Naive thymus-derived CD4-positive, alpha-beta T cell (primary cell): ENCODE measurements at regions of chr4 and their contacts with region 1.

Region 1: GRCh38 chr4:142126890-142127497 is 490.6 kb downstream of the IL15 start:
- DNase-seq: peak in 8 of 9 donors; percentile 30 to 73 (median 66)
- ATAC-seq: peak; percentile 83
- H3K4me3 ChIP-seq: no peak overlapping the region
- H3K4me3 Mint-ChIP-seq: no peak overlapping the region
- H3K27ac ChIP-seq: no peak overlapping the region
- H3K27ac Mint-ChIP-seq: peak overlapping the region in 1 of 9 donors; percentile 22
- H3K4me1 ChIP-seq: peaks cover 0 to 32% of the 10 kb centered on the region in 2 donors
- H3K4me1 Mint-ChIP-seq: peaks cover 10 to 38% (median 37%) of the 10 kb centered on the region in 7 donors
- H3K27me3 ChIP-seq: no peaks in the 10 kb centered on the region
- H3K27me3 Mint-ChIP-seq: no peaks in the 10 kb centered on the region

Region 2: GRCh38 chr4:141307241-141307689 is 819.7 kb before region 1 on chr4:
- CTCF ChIA-PET with region 1: no interaction called
- POLR2A ChIA-PET with region 1: no interaction called
- intact Hi-C with region 1: loop called (anchors 2 to 10 kb)
- DNase-seq: peak; percentile 11 to 57 (median 43)
- ATAC-seq: peak; percentile 94
- H3K4me3 ChIP-seq: no peak overlapping the region
- H3K4me3 Mint-ChIP-seq: no peak overlapping the region
- H3K27ac ChIP-seq: no peak overlapping the region
- H3K27ac Mint-ChIP-seq: no peak overlapping the region
- H3K4me1 ChIP-seq: no peaks in the 10 kb centered on the region
- H3K4me1 Mint-ChIP-seq: peaks cover 0 to 5% (median 0%) of the 10 kb centered on the region in 7 donors
- H3K27me3 ChIP-seq: no peaks in the 10 kb centered on the region
- H3K27me3 Mint-ChIP-seq: peaks cover 0 to 10% (median 4%) of the 10 kb centered on the region in 5 donors

Region 3: DNA sequence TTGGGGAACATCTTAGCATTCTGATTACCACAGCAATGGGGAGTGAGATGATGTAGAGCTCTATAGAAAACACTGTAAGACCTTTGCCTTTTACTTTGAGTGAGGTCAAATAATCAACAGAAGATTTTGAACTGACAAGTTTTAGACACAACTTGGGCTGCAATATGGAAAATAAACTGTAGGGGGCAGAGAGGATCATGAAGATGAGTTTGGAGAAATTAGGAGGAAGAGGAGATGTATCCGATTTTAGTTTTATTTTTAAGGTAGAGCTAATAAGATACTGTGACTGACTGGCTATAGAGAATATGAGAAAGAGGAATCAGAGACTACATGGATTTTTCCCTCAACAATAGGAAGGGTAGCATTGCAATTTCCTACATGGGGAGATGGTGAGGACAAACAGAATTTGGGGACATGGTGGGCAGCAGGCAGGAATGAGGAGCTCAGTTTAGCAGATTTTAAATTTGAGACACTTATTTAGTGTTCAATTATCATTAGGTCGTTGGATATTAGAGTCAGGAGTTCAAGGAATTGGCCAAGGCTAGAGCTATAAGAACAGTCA is 156.0 kb after region 1 on chr4:
- CTCF ChIA-PET with region 1: interaction called, 3 read pairs
- POLR2A ChIA-PET with region 1: no interaction called
- intact Hi-C with region 1: loop called in 1 of 2 experiments (anchors 1 kb)
- DNase-seq: peak in 7 of 9 donors; percentile 26 to 53 (median 38)
- ATAC-seq: peak; percentile 64
- H3K4me3 ChIP-seq: no peak overlapping the region
- H3K4me3 Mint-ChIP-seq: no peak overlapping the region
- H3K27ac ChIP-seq: no peak overlapping the region
- H3K27ac Mint-ChIP-seq: no peak overlapping the region
- H3K4me1 ChIP-seq: peaks cover 7 to 15% of the 10 kb centered on the region in 2 donors
- H3K4me1 Mint-ChIP-seq: peaks cover 9 to 35% (median 25%) of the 10 kb centered on the region in 7 donors
- H3K27me3 ChIP-seq: no peaks in the 10 kb centered on the region
- H3K27me3 Mint-ChIP-seq: no peaks in the 10 kb centered on the region

Region 4: GRCh38 chr4:142435599-142436235 is 308.7 kb after region 1 on chr4:
- CTCF ChIA-PET with region 1: no interaction called
- POLR2A ChIA-PET with region 1: no interaction called
- intact Hi-C with region 1: loop called in 1 of 2 experiments (anchors 1 kb)
- DNase-seq: no peak
- ATAC-seq: no peak
- H3K4me3 ChIP-seq: no peak overlapping the region
- H3K4me3 Mint-ChIP-seq: no peak overlapping the region
- H3K27ac ChIP-seq: no peak overlapping the region
- H3K27ac Mint-ChIP-seq: peak overlapping the region in 2 of 9 donors; percentile 21 to 49
- H3K4me1 ChIP-seq: peaks cover 4 to 8% of the 10 kb centered on the region in 2 donors
- H3K4me1 Mint-ChIP-seq: peaks cover 8 to 43% (median 31%) of the 10 kb centered on the region in 7 donors
- H3K27me3 ChIP-seq: no peaks in the 10 kb centered on the region
- H3K27me3 Mint-ChIP-seq: no peaks in the 10 kb centered on the region

Region 5: GRCh38 chr4:142840516-142841123 is 713.6 kb after region 1 on chr4:
- CTCF ChIA-PET with region 1: interaction called, 11 read pairs
- POLR2A ChIA-PET with region 1: no interaction called
- intact Hi-C with region 1: loop called (anchors 1 kb)
- DNase-seq: peak in 5 of 9 donors; percentile 20 to 46 (median 35)
- ATAC-seq: peak; percentile 37
- H3K4me3 ChIP-seq: no peak overlapping the region
- H3K4me3 Mint-ChIP-seq: no peak overlapping the region
- H3K27ac ChIP-seq: no peak overlapping the region
- H3K27ac Mint-ChIP-seq: no peak overlapping the region
- H3K4me1 ChIP-seq: peaks cover 0 to 5% of the 10 kb centered on the region in 2 donors
- H3K4me1 Mint-ChIP-seq: peaks cover 6 to 27% (median 18%) of the 10 kb centered on the region in 7 donors
- H3K27me3 ChIP-seq: no peaks in the 10 kb centered on the region
- H3K27me3 Mint-ChIP-seq: peaks cover 0 to 8% (median 0%) of the 10 kb centered on the region in 5 donors

Region 6: DNA sequence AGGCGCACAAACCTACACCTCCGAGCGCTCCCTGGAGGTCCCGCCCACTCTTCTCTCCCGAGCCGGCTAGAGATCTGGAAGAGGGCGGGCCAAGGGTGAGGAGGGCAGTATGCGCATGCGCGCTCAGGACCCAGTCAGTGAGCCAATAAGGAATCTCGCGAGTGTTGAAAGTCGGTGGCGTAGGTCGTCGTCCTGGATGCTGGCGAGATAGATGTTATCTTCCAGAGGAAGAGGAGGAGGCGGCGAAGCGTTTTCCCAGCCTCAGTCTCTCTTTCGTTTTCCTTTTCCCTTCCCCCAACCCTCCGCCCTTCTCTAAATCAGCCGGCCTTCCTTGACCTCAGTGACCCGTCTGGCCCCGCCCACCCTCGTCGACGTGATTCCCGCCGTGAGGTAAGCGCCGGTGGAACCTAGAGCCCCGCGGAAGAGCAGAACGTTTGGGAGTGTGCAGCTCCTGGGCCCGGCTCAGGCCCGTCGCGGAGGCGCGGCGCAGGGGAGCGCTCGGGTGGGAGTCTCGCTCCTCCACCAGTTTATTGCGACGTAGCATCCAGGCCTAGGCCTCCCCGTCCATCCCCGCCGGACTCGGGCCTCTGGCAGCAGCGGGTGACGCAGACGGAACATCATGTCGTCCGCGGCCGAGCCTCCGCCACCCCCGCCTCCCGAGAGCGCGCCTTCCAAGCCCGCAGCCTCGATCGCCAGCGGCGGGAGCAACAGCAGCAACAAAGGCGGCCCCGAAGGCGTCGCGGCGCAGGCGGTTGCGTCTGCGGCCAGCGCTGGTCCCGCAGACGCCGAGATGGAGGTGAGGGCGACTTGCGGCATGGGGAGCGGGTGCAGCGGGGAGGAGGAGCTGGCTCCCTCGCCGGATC is 1386.5 kb after region 1 on chr4 and contains the start of gene SMARCA5:
- CTCF ChIA-PET with region 1: no interaction called
- POLR2A ChIA-PET with region 1: no interaction called
- intact Hi-C with region 1: loop called in 1 of 2 experiments (anchors 10 kb)
- DNase-seq: peak; percentile 93 to 99 (median 98)
- ATAC-seq: peak; percentile 92
- H3K4me3 ChIP-seq: peak within 1 kb of the TSS; percentile 91
- H3K4me3 Mint-ChIP-seq: peak within 1 kb of the TSS; percentile 93 to 100 (median 98)
- H3K27ac ChIP-seq: peak within 1 kb of the TSS; percentile 98
- H3K27ac Mint-ChIP-seq: peak within 1 kb of the TSS; percentile 97 to 100 (median 100)
- H3K4me1 ChIP-seq: peaks cover 20 to 36% of the 10 kb centered on the region in 2 donors
- H3K4me1 Mint-ChIP-seq: peaks cover 22 to 54% (median 37%) of the 10 kb centered on the region in 7 donors
- H3K27me3 ChIP-seq: no peaks in the 10 kb centered on the region
- H3K27me3 Mint-ChIP-seq: peaks cover 0 to 30% (median 0%) of the 10 kb centered on the region in 5 donors
- total RNA-seq, gene SMARCA5: 48.3 to 58.2 (median 54.4) TPM